ENCODE measurements at regions of chr3 and their contacts with region 1.

Region 1: DNA sequence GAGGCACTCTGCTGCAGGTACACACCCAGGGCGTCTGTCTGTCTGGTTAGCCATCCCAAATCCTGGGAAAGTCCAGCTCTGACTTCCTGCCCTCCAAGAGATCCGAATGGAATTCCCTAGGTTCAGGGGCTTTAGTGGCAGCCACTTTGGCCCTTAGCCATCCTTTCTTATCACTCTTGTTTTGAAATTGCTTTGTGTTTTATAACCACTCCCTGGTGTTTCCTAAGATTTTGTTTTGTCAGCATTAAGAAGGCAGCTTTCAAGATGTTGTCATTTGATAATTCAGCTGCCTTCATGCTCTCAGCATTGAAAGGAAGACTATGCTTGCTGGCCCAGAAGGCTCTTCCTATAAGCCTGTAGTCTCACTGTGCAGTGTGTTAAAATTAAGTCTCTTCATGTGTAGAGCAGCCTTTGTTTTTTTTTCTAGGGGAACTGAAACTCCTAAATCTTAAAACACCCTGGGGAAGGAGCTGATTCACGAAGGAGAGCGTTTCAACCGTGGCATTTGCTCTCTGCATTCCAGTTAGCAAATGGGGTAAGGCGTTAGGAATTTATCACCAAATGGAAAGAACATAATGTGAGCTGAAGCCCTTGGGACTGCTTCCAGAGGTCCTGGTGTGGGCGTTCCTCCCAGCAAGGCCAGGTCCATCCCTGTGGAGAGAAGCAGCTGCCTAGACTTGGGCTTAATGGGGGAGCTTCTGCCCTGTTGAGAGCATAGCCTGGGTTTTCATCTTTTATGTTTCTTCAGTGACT is 14.2 kb upstream of the CLEC3B start:
- DNase-seq: peak; percentile 80
- ATAC-seq: peak; percentile 90

Region 2: DNA sequence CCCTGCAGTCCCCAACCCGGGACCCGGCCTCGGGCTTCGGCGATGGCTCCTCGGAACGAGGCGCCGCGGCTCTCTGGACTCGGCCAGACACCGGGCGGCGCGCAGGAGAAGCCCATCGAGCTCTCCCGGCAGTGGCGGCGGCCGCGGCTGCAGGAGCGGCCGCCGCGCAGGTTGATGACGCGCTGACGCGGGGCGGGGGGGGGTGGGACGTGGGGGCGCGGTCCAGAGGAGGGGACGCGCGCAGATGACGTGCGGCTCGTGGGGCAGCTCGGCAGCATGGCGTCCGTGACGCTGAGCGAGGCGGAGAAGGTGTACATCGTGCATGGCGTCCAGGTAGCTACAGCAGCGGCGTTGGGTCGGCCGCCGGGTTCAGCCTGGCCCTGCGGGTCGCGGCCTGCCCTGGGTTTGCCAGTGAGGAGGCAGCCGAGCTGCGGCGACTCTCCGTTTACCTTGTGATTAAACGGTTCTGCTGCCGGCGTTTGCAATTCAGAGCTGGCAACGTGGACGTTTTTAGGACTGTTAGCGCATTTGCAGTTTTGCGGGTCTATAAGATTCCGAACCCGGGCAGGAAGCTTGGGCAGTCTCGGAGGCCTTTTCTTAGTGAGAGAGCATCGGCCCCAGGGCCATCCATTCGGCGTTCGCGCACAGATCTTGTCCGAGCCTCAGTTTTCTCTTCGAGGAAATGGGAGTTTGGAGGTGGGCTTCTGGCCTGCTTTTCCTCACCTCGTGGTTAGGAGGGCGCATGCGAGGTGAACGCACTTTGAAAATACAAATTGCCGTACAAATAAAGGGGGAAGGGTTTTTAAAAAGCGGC is 35.7 kb before region 1 on chr3 and contains the starts of genes EXOSC7 and ZDHHC3:
- intact Hi-C with region 1: loop called (anchors 5 kb)
- DNase-seq: peak; percentile 96
- ATAC-seq: peak; percentile 91
- total RNA-seq, gene EXOSC7: 23.1 TPM
- total RNA-seq, gene ZDHHC3: 35.8 TPM

Region 3: DNA sequence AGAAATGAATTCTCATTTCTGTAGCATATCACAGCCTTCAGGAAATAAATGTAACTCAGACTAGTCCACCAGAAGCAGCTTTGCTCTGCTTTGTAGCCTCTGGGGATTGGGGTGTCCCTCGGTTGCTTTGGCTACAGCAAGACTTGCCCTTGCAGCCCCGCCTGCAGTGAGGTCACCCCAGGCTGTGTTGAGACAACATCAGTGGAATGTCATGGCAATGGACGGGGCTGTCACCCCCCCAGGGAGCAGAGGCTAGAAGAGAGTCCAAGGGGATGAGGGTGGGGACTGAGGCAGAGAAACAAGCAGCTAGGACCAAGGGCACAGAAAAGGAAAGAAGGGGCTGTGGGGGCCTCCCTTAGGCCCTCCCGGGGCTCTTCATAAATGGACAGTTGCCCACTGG is 15.0 kb after region 1 on chr3:
- intact Hi-C with region 1: no loop called
- DNase-seq: peak; percentile 91
- ATAC-seq: peak; percentile 89

Region 4: GRCh38 chr3:45154641-45155147 is 142.8 kb after region 1 on chr3:
- intact Hi-C with region 1: no loop called
- DNase-seq: no peak
- ATAC-seq: no peak

Measured in Right ventricle myocardium inferior (tissue), 1 donor.